HEK293T (cell line): ENCODE measurements at regions of chr17 and their contacts with region 1.

Region 1: DNA sequence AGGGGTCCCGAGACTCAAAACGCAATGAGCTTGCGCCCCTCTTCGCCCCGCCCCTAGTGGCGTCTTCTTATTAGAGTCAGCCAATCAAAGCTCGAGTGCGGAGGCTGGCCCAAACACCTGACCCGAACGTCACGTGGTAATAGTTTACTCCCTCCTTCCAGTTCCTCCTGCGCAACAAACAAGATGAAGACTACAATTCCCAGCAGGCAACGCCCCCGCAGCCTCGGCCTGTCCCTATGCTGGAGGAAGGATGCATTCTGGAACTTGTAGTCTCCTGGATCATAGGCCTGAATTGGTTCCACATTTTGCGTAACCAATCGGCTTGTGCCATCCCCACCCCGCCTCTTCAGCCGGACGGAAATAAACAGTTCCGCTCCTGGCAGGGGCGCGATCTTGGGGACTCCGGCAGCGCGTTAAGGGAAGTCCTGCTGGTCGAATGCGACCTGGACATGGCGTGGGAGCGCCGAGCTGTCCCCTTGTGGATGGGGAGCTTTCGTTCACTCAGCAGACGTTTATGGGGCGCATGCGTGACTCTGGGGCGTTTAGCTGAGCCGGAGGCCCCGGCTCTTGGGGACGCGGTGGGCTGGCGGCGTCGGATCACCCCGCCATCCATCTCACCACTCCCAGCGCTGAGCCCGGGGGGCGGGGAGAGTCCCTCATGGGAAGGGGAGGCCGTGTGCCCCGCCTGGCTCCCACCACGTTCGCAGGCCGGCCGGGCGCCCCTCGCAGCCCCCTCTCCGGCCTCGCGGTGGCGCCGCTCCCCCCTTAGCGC is at the start of gene WBP2:
- DNase-seq: peak; percentile 98

Region 2: DNA sequence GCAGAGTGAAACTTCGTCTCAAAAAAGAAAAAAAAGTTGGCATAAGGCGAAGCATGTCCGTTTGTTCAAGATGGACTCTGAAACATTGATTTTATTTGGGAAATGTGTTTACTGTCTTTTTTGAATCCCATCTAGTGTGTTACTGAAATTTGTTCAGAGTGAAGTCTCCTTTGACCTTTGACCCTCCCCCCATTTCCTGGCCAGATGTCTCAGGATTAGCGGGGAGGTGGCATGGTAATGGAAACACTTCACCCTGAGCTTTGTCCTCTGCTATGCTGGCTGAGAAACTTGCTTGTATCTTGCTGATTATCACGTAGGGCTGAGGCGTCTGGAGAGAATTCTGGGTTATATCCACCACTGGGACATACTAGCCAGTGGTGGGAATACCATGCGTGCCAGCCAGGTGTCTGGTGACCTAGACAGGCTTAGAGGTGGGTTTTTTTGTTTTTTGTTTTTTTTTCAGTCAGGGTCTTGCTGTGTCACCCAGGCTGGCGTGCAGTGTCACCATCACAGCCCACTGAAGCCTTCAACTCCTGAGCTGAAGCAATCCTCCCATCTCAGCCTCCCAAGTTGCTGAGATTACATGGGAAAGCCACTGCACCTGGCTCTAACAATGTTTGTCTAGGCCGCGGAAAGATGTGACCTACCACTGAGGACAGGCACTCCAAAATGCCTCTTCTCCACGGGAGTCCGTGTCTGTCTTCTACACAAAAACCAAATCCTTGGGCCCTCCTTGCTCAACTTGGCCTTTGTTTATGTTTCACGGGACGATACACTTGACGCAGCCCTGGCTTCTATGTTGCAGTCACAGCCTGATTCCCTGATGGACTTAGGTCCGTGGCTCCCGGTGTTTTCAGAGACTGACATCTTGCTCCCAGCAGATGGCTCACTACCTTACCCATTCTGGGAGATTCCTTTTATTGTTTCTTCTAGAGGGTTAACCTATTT is 83.9 kb before region 1 on chr17:
- CTCF ChIA-PET with region 1: interaction called, 4 read pairs
- POLR2A ChIA-PET with region 1: interaction called, 12 read pairs
- DNase-seq: peak; percentile 7

Region 3: DNA sequence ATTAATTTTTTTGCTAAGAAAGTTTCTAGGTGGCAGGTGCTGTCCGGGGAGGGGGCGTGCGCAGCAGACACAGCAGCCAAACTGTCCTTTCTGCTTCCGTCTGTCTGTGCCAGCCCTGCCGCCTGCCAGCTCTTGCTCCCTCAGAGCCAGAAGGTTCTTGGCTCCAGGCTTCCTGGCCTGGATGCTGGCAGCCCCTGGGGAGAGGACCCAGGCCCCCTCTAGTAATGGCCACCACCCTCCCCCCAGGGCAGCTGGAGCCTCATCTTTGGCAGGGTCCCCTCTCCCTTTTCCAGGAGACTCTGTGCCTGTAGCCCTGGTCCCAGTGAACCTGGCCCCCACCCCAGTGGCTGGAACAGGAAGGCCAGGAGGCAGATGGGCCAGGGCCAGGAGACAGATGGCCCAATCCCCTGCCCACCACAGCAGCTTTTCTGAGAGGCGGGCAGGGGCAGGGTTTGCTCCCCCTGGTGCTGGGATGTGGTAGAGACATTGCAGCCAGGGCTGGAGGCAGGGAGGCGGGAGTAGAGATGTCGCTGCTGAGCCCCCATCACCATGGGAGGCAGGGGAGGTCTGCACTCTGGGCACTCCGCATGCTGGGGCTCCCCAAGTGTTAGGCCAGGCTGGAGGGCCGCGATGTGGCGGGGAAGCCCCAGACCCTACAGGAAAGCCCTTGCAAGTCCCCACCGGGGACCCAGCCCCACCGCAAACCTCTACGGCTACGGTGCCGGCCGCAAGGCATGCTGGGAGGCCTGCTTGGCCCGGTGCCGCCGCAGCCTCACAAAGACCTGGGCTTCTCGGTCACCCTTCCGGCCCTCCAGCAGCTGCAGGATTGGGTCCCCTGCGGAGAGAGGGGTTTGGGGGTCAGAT is 28.0 kb before region 1 on chr17:
- CTCF ChIA-PET with region 1: interaction called, 11 read pairs
- POLR2A ChIA-PET with region 1: interaction called, 6 read pairs
- DNase-seq: peak; percentile 91

Region 4: GRCh38 chr17:75845049-75845860 is 10.2 kb before region 1 on chr17:
- CTCF ChIA-PET with region 1: interaction called, 13 read pairs
- POLR2A ChIA-PET with region 1: interaction called, 39 read pairs
- DNase-seq: peak; percentile 88

Region 5: GRCh38 chr17:75896415-75897159 is 41.1 kb after region 1 on chr17 and contains the start of gene TRIM65:
- CTCF ChIA-PET with region 1: interaction called, 13 read pairs
- POLR2A ChIA-PET with region 1: interaction called, 24 read pairs
- DNase-seq: peak; percentile 88